ENCODE measurements at regions of chr9 and their contacts with region 1.

Region 1: DNA sequence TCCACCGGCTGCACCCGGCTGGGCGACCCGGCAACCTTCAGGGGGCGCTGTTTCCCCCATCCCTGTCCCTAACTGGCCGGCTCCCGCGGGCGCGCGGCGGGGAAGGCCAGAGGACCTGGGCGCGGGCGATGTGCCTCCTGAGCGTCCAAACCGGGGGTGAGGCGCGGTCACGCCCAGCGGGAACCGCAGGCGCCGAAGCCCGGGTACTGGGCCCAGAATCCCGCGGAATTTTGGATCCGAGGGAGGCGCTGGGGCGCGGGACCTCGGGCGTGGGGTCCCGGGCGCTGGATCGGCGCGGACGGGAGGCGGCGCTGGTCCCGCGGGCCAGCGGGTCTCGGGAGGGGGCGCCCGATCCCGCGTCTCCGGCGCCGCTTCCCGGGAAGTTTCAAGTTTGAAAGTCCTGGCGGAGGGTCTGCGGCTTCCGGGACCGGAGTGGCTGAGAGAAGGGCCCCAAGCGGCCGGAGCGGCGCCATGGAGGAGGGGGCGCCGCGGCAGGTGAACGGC is at the start of gene PKN3:
- H3K4me3 ChIP-seq: peak within 1 kb of the TSS; percentile 79
- H3K27ac ChIP-seq: peak within 1 kb of the TSS; percentile 80
- H3K4me1 ChIP-seq: no peaks in the 10 kb centered on the region
- CTCF ChIP-seq: peak; percentile 94

Region 2: DNA sequence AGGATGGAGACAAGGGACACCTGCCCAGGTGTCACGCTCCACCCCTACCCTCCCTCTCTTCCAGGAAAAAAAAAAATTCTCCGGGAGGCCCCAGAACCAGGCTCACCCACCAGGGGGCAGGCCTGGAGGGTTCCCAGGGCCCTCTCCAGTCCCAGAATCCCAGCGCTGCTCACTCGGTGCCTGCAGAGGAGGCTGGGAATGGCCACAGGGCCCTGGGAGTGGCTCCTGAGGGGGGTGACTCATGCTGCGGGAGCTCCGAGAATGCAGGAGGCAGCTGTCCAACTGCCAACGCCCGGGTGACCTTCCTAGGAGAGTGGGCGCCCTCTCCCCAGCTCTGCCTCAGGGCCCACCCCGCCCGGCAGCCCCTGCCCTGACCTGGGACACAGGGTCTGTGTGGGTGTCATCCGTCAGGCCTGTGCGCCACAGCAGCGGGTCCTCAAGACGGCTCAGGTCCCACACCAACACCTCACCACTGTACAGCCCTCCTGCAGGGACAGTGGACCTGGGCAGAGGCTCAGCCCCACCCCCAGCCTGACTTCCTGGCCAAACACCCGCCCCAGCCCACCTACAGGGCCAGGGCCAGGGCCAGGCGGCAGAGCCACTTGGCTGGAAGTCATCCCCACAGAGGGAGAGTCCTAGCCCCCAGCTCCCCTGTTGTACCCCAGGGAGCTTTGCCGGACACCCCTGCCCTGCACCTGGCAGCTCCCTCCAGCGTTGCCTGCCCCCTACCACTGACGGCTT is 67.0 kb before region 1 on chr9:
- CTCF ChIA-PET with region 1: interaction called, 19 read pairs
- POLR2A ChIA-PET with region 1: interaction called, 9 read pairs
- H3K4me3 ChIP-seq: peak overlapping the region; percentile 16; the same call in 1 of the 2 replicates
- H3K27ac ChIP-seq: peak overlapping the region; percentile 9; the same call in 1 of the 2 replicates
- H3K4me1 ChIP-seq: peaks cover 6% of the 10 kb centered on the region
- CTCF ChIP-seq: peak; percentile 91

Region 3: DNA sequence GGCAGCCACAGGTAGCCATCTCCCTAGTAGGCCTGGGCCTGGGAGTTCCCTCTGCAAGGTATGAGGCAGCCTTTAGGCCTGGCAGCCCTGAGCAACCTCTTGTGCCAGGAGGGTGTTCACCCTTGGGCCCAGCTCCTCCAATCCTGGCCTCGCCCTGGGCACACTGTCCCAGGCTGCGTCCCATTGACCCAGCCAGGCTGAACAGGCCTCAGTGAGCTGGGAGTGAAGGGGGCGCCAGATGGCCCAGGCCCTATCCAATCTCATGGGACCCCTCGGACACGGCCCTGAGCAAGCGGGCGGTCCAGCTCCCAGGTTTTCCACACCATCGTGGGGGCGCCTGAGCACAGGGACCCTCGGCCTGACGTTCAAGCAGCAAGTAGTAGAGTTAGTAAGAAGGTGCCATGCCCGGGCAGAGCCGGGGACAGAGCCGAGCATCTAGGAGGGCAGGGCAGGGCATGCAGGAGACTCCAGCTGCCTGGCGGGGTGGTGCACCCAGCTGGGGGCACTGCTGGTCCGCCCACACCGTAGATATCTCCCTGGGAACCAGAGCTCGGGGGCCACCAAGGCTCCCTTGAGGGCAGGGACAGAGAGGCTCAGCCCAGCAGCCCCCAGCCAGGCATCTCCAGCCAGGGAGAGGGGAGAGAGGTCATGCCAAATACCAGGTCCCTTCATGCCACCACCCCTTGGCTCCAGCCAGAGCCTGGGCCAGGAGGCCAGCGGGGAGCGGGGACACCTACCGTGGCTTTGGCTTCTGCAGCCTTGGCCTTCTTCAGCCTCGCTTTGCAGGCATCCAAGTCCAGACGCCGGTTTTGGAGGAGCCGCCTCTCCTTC is 311.4 kb after region 1 on chr9:
- CTCF ChIA-PET with region 1: no interaction called
- POLR2A ChIA-PET with region 1: no interaction called
- H3K4me3 ChIP-seq: no peak overlapping the region
- H3K27ac ChIP-seq: no peak overlapping the region
- H3K4me1 ChIP-seq: no peaks in the 10 kb centered on the region
- CTCF ChIP-seq: no peak